Mucosa of descending colon (tissue), 3 donors: ENCODE measurements at regions of chr14 and their contacts with region 1.

Region 1: DNA sequence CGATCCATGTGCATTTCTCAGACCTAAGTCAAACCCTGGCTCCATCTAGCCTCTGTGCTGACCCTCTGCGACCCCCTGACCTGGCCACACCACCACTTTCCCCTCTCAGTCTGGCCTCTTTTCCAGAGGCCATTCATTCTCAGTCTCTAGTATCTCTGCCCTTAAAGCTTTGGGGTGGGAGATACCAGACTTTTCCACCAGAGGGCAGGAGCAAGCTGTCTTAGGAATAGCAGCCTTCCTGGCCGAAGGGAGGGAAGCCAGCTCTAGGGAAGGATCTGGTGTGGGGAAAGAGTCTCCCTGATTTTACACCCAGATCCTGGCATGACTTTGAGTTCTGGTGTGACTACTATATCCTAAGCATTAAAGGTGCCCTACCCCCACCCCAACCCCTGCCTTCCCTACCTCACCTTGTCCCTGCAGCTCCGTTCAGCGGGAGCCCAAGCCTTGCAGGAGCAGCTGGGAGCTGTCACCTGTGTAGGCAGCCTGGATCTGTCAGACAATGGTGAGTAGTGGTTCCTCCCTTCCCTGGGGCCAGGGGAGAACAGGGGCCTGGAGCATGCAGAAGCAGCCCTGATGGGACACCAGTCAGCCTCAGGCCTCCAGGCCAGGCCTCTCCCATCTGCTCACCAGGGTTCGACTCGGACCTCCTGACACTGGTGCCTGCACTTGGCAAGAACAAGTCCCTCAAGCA is 6.6 kb downstream of the CARMIL3 start:
- DNase-seq: peak; percentile 34 to 91 (median 62)
- ATAC-seq: peak; percentile 88
- H3K4me3 ChIP-seq: no peak overlapping the region
- H3K4me1 ChIP-seq: peaks cover 9% of the 10 kb centered on the region
- CTCF ChIP-seq: peak; percentile 64

Region 2: GRCh38 chr14:23704890-23705289 is 353.5 kb before region 1 on chr14:
- intact Hi-C with region 1: no loop called
- DNase-seq: no peak
- ATAC-seq: no peak
- H3K4me3 ChIP-seq: no peak overlapping the region
- H3K4me1 ChIP-seq: no peaks in the 10 kb centered on the region
- CTCF ChIP-seq: no peak

Region 3: GRCh38 chr14:23877538-23878180 is 180.7 kb before region 1 on chr14:
- intact Hi-C with region 1: no loop called
- DNase-seq: no peak
- ATAC-seq: no peak
- H3K4me3 ChIP-seq: no peak overlapping the region
- H3K4me1 ChIP-seq: no peaks in the 10 kb centered on the region
- CTCF ChIP-seq: no peak

Region 4: GRCh38 chr14:24089890-24090289 is 31.5 kb after region 1 on chr14:
- intact Hi-C with region 1: loop called in 1 of 2 experiments (anchors 1 kb)
- DNase-seq: no peak
- ATAC-seq: no peak
- H3K4me3 ChIP-seq: no peak overlapping the region
- H3K4me1 ChIP-seq: peaks cover 18% of the 10 kb centered on the region
- CTCF ChIP-seq: no peak

Region 5: GRCh38 chr14:24108336-24108874 is 50.0 kb after region 1 on chr14:
- intact Hi-C with region 1: loop called in 1 of 2 experiments (anchors 10 kb)
- DNase-seq: no peak
- ATAC-seq: no peak
- H3K4me3 ChIP-seq: peak overlapping the region; percentile 3
- H3K4me1 ChIP-seq: peaks cover 8% of the 10 kb centered on the region
- CTCF ChIP-seq: no peak

Region 6: GRCh38 chr14:24146978-24147760 is 88.8 kb after region 1 on chr14 and contains the start of gene RNF31:
- intact Hi-C with region 1: no loop called
- DNase-seq: peak; percentile 97 to 99 (median 99)
- ATAC-seq: peak; percentile 92
- H3K4me3 ChIP-seq: peak within 1 kb of the TSS; percentile 84
- H3K4me1 ChIP-seq: peaks cover 30% of the 10 kb centered on the region
- CTCF ChIP-seq: peak; percentile 24
- total RNA-seq, gene RNF31: 52.8 to 66.2 (median 59.0) TPM